Activated CD4-positive, alpha-beta memory T cell treated with anti-CD3 and anti-CD28 coated beads for 36 hours (primary cell): ENCODE measurements at regions of chr5 and their contacts with region 1.

Region 1: GRCh38 chr5:32388432-32389129 is 56.0 kb downstream of the ZFR start:
- DNase-seq: no peak
- H3K4me3 Mint-ChIP-seq: no peak overlapping the region
- H3K27ac Mint-ChIP-seq: peak overlapping the region; percentile 87
- H3K4me1 Mint-ChIP-seq: peaks cover 17% of the 10 kb centered on the region
- H3K27me3 Mint-ChIP-seq: no peaks in the 10 kb centered on the region

Region 2: GRCh38 chr5:32600057-32600622 is 211.6 kb after region 1 on chr5:
- CTCF ChIA-PET with region 1: no interaction called
- POLR2A ChIA-PET with region 1: no interaction called
- intact Hi-C with region 1: loop called (anchors 5 kb)
- DNase-seq: no peak
- H3K4me3 Mint-ChIP-seq: no peak overlapping the region
- H3K27ac Mint-ChIP-seq: no peak overlapping the region
- H3K4me1 Mint-ChIP-seq: peaks cover 47% of the 10 kb centered on the region
- H3K27me3 Mint-ChIP-seq: no peaks in the 10 kb centered on the region